ENCODE measurements at regions of chr13 and their contacts with region 1.

Region 1: DNA sequence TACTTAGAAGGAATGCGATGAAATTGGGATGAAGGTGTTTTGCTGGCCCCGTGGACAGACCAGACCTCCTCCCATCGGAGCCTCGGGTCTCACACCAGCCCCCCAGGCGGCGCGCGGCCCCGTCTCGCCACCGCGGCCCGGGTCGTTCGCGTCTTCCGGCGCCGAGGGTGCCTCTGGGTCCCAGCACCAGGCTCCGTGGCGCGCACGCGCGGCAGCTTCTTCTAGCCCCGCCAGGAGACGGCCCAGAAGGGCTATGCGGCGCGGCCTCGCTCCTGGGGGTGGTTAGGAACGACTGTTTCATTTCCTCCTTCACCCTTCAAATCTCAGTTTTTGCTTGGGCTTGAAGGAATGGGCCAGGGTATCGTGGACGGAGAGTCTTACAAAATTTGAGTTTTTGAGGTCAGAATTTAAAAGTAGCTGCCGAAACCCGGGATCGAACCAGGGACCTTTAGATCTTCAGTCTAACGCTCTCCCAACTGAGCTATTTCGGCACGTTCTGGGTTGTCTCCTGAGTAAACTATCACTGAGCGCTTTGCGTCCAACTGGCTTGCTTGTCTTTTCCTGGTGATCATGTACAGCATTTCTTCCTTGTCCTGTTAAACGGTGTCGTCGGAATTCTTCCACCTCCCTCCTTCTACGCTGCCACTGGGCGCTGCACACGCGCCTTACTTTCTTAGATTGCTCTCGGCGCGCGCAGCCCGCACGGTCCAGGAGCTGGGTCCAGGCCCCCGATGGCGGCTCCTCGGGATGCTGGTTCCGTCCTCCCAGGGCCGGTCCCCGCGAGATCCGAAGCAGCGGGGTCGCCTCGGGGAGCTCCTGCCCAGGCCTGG is 46.5 kb downstream of the TGDS start:
- DNase-seq: peak; percentile 93
- H3K4me3 Mint-ChIP-seq: peak overlapping the region; percentile 75
- H3K27ac Mint-ChIP-seq: peak overlapping the region; percentile 88
- H3K4me1 Mint-ChIP-seq: peaks cover 5% of the 10 kb centered on the region
- H3K27me3 Mint-ChIP-seq: peaks cover 3% of the 10 kb centered on the region

Region 2: GRCh38 chr13:93549326-93550005 is 1000.0 kb before region 1 on chr13:
- CTCF ChIA-PET with region 1: no interaction called
- intact Hi-C with region 1: no loop called
- DNase-seq: no peak
- H3K4me3 Mint-ChIP-seq: no peak overlapping the region
- H3K27ac Mint-ChIP-seq: no peak overlapping the region
- H3K4me1 Mint-ChIP-seq: no peaks in the 10 kb centered on the region
- H3K27me3 Mint-ChIP-seq: peaks cover 3% of the 10 kb centered on the region

Region 3: DNA sequence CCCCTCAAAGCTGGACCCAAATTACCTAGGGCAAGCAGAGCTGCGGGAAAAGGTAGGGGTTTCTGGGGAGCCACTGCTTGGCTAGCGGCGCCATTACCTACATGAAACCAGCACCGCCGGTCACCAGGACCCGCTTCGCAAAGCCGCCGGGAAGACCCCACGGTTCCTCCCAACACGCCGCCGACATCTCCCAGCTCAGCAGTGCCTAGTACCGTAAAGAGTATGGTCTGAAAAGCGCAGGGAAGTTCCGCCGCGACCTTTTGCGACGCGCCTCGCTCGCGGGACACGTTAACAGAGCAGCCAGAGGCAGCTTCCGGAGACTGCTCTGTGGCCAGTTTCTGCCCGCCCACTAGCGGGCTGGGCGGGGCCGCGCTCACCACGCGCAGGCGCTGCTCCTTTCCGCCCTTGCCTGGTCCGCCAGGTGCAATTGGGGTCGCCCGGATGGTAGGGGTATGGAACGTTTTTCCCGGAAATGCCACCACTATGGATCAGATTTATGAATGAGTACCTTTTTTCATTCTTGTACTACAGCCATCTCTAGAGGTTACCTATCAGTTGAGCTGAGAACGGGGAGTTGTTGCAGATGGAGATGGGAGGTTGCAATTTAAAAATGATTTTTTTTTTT is 46.6 kb after region 1 on chr13 and contains the start of gene TGDS:
- CTCF ChIA-PET with region 1: interaction called, 4 read pairs
- intact Hi-C with region 1: loop called (anchors 1 kb)
- DNase-seq: peak; percentile 92
- H3K4me3 Mint-ChIP-seq: peak within 1 kb of the TSS; percentile 92
- H3K27ac Mint-ChIP-seq: peak within 1 kb of the TSS; percentile 88
- H3K4me1 Mint-ChIP-seq: peaks cover 32% of the 10 kb centered on the region
- H3K27me3 Mint-ChIP-seq: no peaks in the 10 kb centered on the region
- total RNA-seq, gene TGDS: 14.0 to 15.5 TPM

Measured in activated naive CD4-positive, alpha-beta T cell treated with anti-CD3 and anti-CD28 coated beads for 36 hours (primary cell).